Breast epithelium (tissue), 4 donors: ENCODE measurements at regions of chrX and their contacts with region 1.

Region 1: GRCh38 chrX:150334981-150335380 is 28.1 kb upstream of the MAMLD1 start:
- DNase-seq: no peak
- H3K4me3 ChIP-seq: no peak overlapping the region
- H3K27ac ChIP-seq: no peak overlapping the region
- H3K4me1 ChIP-seq: no peaks in the 10 kb centered on the region
- H3K27me3 ChIP-seq: peaks cover 0 to 17% of the 10 kb centered on the region in 2 donors
- CTCF ChIP-seq: no peak
- POLR2A ChIP-seq: no peak

Region 2: GRCh38 chrX:148893395-148893794 is 1441.6 kb before region 1 on chrX:
- intact Hi-C with region 1: no loop called
- DNase-seq: no peak
- H3K4me3 ChIP-seq: no peak overlapping the region
- H3K27ac ChIP-seq: no peak overlapping the region
- H3K4me1 ChIP-seq: no peaks in the 10 kb centered on the region
- H3K27me3 ChIP-seq: peaks cover 0 to 3% of the 10 kb centered on the region in 2 donors
- CTCF ChIP-seq: no peak
- POLR2A ChIP-seq: no peak

Region 3: GRCh38 chrX:149908308-149908707 is 426.7 kb before region 1 on chrX:
- intact Hi-C with region 1: loop called (anchors 5 kb)
- DNase-seq: no peak
- H3K4me3 ChIP-seq: no peak overlapping the region
- H3K27ac ChIP-seq: no peak overlapping the region
- H3K4me1 ChIP-seq: no peaks in the 10 kb centered on the region
- H3K27me3 ChIP-seq: no peaks in the 10 kb centered on the region
- CTCF ChIP-seq: no peak
- POLR2A ChIP-seq: no peak

Region 4: DNA sequence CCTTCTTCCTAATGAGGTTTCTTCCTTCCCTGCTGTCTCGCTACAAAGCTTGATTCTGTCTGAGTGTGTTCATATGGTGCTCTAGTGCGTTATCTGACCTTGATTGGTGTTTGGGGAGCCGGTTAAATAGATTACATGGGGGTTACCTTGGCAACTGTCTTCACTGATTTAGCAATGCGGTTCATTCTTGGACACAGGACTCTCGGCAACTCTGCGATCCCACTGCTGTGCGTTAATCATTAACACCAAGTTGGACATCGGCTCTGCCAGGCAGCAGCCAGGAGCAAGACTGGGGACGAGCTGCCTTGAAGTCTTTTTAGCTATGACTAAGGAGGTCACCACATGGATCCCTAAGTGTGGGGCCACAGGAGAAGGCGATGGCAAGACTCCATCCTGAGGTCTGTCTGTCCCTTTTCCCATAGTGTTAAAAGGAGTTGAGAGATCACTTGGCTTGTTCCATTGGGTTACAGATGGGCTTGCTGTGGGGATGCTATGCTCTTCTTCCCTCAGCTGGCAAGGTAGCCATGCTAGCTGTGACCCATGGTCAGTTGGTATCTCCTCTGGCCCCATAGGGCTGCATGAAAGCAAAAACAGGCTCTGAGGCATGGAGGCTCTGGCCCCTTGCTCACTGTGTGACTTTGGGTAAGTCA is 65.3 kb before region 1 on chrX:
- intact Hi-C with region 1: loop called (anchors 2 kb)
- DNase-seq: no peak
- H3K4me3 ChIP-seq: no peak overlapping the region
- H3K27ac ChIP-seq: no peak overlapping the region
- H3K4me1 ChIP-seq: no peaks in the 10 kb centered on the region
- H3K27me3 ChIP-seq: peaks cover 0 to 12% of the 10 kb centered on the region in 2 donors
- CTCF ChIP-seq: no peak
- POLR2A ChIP-seq: no peak